ENCODE measurements at regions of chr5 and their contacts with region 1.

Region 1: GRCh38 chr5:123423278-123424149 is at the start of gene CEP120:
- DNase-seq: peak; percentile 98
- H3K4me3 Mint-ChIP-seq: no peak within 1 kb of the TSS
- H3K27ac Mint-ChIP-seq: no peak within 1 kb of the TSS
- H3K4me1 Mint-ChIP-seq: peaks cover 21% of the 10 kb centered on the region
- H3K27me3 Mint-ChIP-seq: no peaks in the 10 kb centered on the region
- total RNA-seq, gene CEP120: 39.2 to 39.5 TPM

Region 2: DNA sequence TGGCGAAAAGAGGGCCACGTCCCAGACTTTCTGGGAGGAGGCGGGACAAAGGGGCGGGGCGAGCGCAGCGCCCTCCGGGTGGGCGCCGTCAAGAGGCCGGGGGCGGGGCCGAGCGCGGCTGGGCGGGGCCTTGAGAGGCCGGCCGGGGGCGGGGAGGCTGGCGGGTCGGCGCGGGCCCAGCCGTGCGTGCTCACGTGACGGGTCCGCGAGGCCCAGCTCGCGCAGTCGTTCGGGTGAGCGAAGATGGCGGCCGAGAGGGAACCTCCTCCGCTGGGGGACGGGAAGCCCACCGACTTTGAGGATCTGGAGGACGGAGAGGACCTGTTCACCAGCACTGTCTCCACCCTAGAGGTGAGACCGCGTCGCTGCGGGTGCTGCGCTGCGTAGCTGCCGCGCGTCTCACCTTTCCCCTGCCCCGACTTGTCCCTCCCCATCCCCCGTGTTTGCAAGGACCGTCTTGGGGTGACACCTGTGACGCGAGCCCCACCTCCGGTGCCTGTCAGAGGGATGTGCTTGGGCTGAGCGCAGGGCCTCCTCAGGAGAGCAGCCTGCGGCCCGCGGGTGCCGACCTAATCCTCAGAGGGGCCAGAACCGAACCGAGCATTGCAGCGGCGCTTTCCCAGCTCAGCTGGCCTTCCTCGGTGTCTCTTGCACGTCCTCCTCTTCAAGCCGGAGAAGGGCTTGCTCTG is 648.5 kb before region 1 on chr5 and contains the start of gene SNX2:
- CTCF ChIA-PET with region 1: no interaction called
- intact Hi-C with region 1: loop called (anchors 2 kb)
- DNase-seq: peak; percentile 89
- H3K4me3 Mint-ChIP-seq: peak within 1 kb of the TSS; percentile 89
- H3K27ac Mint-ChIP-seq: peak within 1 kb of the TSS; percentile 78
- H3K4me1 Mint-ChIP-seq: peaks cover 24% of the 10 kb centered on the region
- H3K27me3 Mint-ChIP-seq: no peaks in the 10 kb centered on the region
- total RNA-seq, gene SNX2: 47.3 to 48.0 TPM

Region 3: DNA sequence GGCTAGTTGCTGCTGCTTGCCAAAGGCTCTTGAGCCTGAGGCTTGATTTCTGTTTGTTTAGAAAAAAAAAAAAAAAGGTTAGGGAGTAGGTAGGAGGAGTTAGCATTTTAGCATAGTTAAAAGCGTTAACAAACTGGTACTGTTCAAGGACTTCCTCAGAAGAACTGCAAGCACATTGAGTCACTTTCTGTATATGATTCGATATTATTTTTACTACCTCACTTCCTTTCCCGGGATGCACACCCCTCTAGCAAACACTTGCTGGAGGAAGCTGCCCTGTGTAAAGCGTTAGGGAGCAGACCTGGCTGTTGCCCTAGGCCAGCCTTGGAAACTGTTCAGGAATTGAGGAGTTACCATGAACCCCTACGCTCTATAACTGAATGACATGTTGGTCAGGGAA is 15.4 kb after region 1 on chr5:
- CTCF ChIA-PET with region 1: interaction called, 14 read pairs
- intact Hi-C with region 1: loop called (anchors 1 kb)
- DNase-seq: peak; percentile 57
- H3K4me3 Mint-ChIP-seq: no peak overlapping the region
- H3K27ac Mint-ChIP-seq: peak overlapping the region; percentile 68
- H3K4me1 Mint-ChIP-seq: peaks cover 26% of the 10 kb centered on the region
- H3K27me3 Mint-ChIP-seq: no peaks in the 10 kb centered on the region

Region 4: DNA sequence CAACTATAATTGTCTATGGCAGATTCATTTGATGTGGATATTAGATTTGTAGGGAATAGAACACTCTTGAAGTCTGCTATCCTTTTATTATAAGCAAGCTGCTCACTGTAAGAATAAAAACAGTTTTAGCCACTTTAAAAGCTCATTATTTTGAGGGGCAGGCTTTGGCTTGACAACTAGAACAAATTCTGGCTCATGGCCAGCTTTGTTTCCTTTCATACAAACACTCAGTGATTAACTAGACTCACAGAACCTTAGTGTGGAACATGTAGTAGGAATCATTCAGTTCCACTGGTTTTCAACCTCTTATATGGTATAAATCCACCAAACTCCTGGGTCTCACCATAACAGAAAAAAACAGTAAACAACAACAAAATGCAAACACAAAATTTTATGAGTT is 27.1 kb after region 1 on chr5:
- CTCF ChIA-PET with region 1: interaction called, 12 read pairs
- intact Hi-C with region 1: loop called (anchors 1 kb)
- DNase-seq: no peak
- H3K4me3 Mint-ChIP-seq: no peak overlapping the region
- H3K27ac Mint-ChIP-seq: no peak overlapping the region
- H3K4me1 Mint-ChIP-seq: peaks cover 34% of the 10 kb centered on the region
- H3K27me3 Mint-ChIP-seq: peaks cover 9% of the 10 kb centered on the region

Region 5: GRCh38 chr5:123460296-123460729 is 36.8 kb after region 1 on chr5:
- CTCF ChIA-PET with region 1: interaction called, 5 read pairs
- intact Hi-C with region 1: loop called (anchors 1 kb)
- DNase-seq: peak; percentile 81
- H3K4me3 Mint-ChIP-seq: peak overlapping the region; percentile 10
- H3K27ac Mint-ChIP-seq: peak overlapping the region; percentile 90
- H3K4me1 Mint-ChIP-seq: peaks cover 20% of the 10 kb centered on the region
- H3K27me3 Mint-ChIP-seq: no peaks in the 10 kb centered on the region

Region 6: GRCh38 chr5:123645024-123645603 is 221.6 kb after region 1 on chr5:
- CTCF ChIA-PET with region 1: no interaction called
- intact Hi-C with region 1: no loop called
- DNase-seq: no peak
- H3K4me3 Mint-ChIP-seq: no peak overlapping the region
- H3K27ac Mint-ChIP-seq: no peak overlapping the region
- H3K4me1 Mint-ChIP-seq: peaks cover 3% of the 10 kb centered on the region
- H3K27me3 Mint-ChIP-seq: peaks cover 7% of the 10 kb centered on the region

Region 7: DNA sequence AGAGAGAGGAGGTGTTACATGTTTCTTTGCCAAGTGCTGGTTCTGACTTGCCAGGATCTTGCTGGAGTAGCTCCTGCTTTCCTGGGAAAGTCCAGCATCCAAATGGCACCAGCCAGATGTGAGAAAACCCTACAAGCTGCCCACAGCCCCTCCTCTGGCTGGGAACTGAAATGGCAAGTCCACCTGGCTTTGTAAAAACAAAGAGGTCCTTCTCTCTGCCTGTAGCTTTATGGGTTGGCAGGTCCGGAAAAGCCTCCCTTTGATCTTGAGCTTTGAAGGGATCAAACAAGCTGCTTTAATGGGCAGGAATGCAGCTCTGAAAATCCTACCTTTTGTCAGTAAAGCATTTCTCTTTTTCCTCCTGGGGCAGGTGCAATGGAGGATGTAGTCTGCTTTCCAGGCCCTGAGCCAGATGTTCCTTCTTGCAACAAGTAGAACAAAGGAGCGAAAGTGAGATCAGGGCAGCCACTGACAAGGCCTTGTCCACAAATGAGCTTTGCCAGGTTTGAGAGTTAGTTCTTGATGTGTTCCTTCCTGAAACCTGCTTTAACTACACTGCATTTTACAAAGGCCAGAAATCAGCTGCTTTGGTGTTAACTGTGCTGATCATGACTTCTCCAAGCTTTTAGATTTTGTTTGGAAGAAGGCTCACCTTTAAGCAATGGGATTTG is 866.3 kb after region 1 on chr5:
- CTCF ChIA-PET with region 1: no interaction called
- intact Hi-C with region 1: no loop called
- DNase-seq: no peak
- H3K4me3 Mint-ChIP-seq: no peak overlapping the region
- H3K27ac Mint-ChIP-seq: no peak overlapping the region
- H3K4me1 Mint-ChIP-seq: no peaks in the 10 kb centered on the region
- H3K27me3 Mint-ChIP-seq: no peaks in the 10 kb centered on the region